Panc1 (cell line): ENCODE measurements at regions of chr19 and their contacts with region 1.

Region 1: GRCh38 chr19:38577826-38578225 is 39.9 kb downstream of the MAP4K1 start:
- DNase-seq: no peak
- ATAC-seq: no peak
- H3K4me3 ChIP-seq: no peak overlapping the region
- H3K27ac ChIP-seq: no peak overlapping the region
- H3K4me1 ChIP-seq: no peaks in the 10 kb centered on the region
- H3K27me3 ChIP-seq: no peaks in the 10 kb centered on the region
- CTCF ChIP-seq: no peak

Region 2: GRCh38 chr19:38606131-38606530 is 28.3 kb after region 1 on chr19:
- CTCF ChIA-PET with region 1: no interaction called
- POLR2A ChIA-PET with region 1: interaction called, 12 read pairs
- in situ Hi-C with region 1: no loop called
- intact Hi-C with region 1: no loop called
- DNase-seq: no peak
- ATAC-seq: peak; percentile 35
- H3K4me3 ChIP-seq: no peak overlapping the region
- H3K27ac ChIP-seq: no peak overlapping the region
- H3K4me1 ChIP-seq: no peaks in the 10 kb centered on the region
- H3K27me3 ChIP-seq: no peaks in the 10 kb centered on the region
- CTCF ChIP-seq: no peak